ENCODE measurements at regions of chr4 and their contacts with region 1.

Region 1: GRCh38 chr4:87399148-87399547 is 8.2 kb upstream of the HSD17B11 start:
- DNase-seq: no peak
- ATAC-seq: no peak
- H3K4me3 ChIP-seq: no peak overlapping the region
- H3K4me3 Mint-ChIP-seq: no peak overlapping the region
- H3K27ac ChIP-seq: no peak overlapping the region
- H3K27ac Mint-ChIP-seq: no peak overlapping the region
- H3K4me1 ChIP-seq: no peaks in the 10 kb centered on the region
- H3K4me1 Mint-ChIP-seq: peaks cover 0 to 9% (median 5%) of the 10 kb centered on the region in 7 donors
- H3K27me3 ChIP-seq: no peaks in the 10 kb centered on the region
- H3K27me3 Mint-ChIP-seq: peaks cover 0 to 3% (median 0%) of the 10 kb centered on the region in 5 donors

Region 2: DNA sequence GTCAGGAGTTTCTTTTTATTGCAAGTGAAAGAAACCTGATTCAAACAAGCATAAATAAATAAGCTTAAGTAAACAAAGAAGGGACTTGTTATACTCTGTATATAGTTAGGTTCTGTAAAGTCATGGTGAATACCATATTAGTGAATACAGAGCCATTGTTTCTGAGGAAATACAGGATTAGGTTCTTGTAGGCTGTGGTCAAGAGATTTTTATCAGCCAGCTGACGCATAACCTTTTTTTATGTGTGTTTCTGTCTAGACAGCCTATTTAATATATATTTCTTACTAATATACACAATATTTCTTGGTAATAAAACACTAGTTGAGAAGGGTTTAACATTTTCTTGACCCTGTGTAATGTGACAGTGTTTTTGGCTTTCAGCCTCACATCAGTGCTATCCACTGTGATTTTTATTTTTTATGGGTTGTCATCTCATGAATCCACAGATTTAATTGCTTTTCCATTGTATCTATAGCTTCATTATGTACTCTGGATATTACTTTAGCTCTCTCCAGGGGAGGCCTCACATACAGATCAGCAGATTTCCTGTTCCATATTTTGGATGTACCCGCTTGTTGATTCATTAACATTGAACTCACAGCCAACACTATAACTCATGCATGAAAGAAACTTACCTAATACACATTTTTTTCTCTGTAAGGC is 1201.2 kb after region 1 on chr4:
- CTCF ChIA-PET with region 1: no interaction called
- POLR2A ChIA-PET with region 1: no interaction called
- intact Hi-C with region 1: loop called (anchors 5 to 10 kb)
- DNase-seq: no peak
- ATAC-seq: no peak
- H3K4me3 ChIP-seq: no peak overlapping the region
- H3K4me3 Mint-ChIP-seq: peak overlapping the region in 6 of 10 donors; percentile 12 to 79 (median 65)
- H3K27ac ChIP-seq: peak overlapping the region; percentile 20
- H3K27ac Mint-ChIP-seq: peak overlapping the region in 7 of 9 donors; percentile 44 to 85 (median 60)
- H3K4me1 ChIP-seq: peaks cover 30 to 51% of the 10 kb centered on the region in 2 donors
- H3K4me1 Mint-ChIP-seq: peaks cover 51 to 89% (median 84%) of the 10 kb centered on the region in 7 donors
- H3K27me3 ChIP-seq: no peaks in the 10 kb centered on the region
- H3K27me3 Mint-ChIP-seq: no peaks in the 10 kb centered on the region